Activated T-helper 1 cell treated with anti-CD3 and anti-CD28 coated beads, Interleukin-12 subunit alpha, Interleukin-12 subunit beta, Interleukin-2, Interleukin-4 antibody, amounts not matched to agents 30 ng/mL and 10 ng/mL and 1 ng/mL, durations not matched to agents 14 hours and 24 hours and 36 hours (primary cell): ENCODE measurements at regions of chr21 and their contacts with region 1.

Region 1: GRCh38 chr21:21341041-21341440 is 342.8 kb downstream of the NCAM2 start:
- DNase-seq: no peak
- H3K4me3 Mint-ChIP-seq: no peak overlapping the region
- H3K27ac Mint-ChIP-seq: no peak overlapping the region
- H3K4me1 Mint-ChIP-seq: no peaks in the 10 kb centered on the region
- H3K27me3 Mint-ChIP-seq: no peaks in the 10 kb centered on the region

Region 2: GRCh38 chr21:21286170-21286798 is 54.8 kb before region 1 on chr21:
- intact Hi-C with region 1: no loop called
- DNase-seq: no peak
- H3K4me3 Mint-ChIP-seq: no peak overlapping the region
- H3K27ac Mint-ChIP-seq: no peak overlapping the region
- H3K4me1 Mint-ChIP-seq: no peaks in the 10 kb centered on the region
- H3K27me3 Mint-ChIP-seq: no peaks in the 10 kb centered on the region

Region 3: DNA sequence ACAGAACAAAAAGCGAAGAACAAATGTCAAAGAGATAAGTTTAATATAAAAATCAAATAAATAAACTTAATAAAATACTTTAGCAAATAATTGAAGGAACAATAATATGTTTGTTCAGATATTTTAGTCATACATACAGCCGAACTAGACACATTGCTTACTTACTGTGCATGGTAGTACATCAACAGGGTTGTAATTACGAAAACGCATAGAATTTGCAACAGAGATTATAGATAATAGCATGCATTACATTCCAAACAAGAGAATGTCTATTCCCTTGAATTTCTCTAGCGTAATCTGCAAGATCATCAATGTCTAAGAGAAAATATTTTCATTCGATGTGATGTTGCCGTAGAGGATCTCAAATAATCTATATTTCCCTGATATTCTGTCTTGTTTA is 16.8 kb after region 1 on chr21:
- intact Hi-C with region 1: loop called (anchors 2 kb)
- DNase-seq: no peak
- H3K4me3 Mint-ChIP-seq: no peak overlapping the region
- H3K27ac Mint-ChIP-seq: no peak overlapping the region
- H3K4me1 Mint-ChIP-seq: no peaks in the 10 kb centered on the region
- H3K27me3 Mint-ChIP-seq: no peaks in the 10 kb centered on the region